A673 (cell line): ENCODE measurements at regions of chr20 and their contacts with region 1.

Region 1: GRCh38 chr20:58870239-58871014 is 17.9 kb downstream of the GNAS start:
- DNase-seq: peak; percentile 69
- H3K4me3 ChIP-seq: no peak overlapping the region
- H3K27ac ChIP-seq: no peak overlapping the region
- H3K4me1 ChIP-seq: peaks cover 4% of the 10 kb centered on the region
- H3K27me3 ChIP-seq: peaks cover 20% of the 10 kb centered on the region
- CTCF ChIP-seq: peak; percentile 83

Region 2: GRCh38 chr20:57866221-57867106 is 1004.0 kb before region 1 on chr20:
- CTCF ChIA-PET with region 1: no interaction called
- POLR2A ChIA-PET with region 1: no interaction called
- intact Hi-C with region 1: no loop called
- DNase-seq: no peak
- H3K4me3 ChIP-seq: no peak overlapping the region
- H3K27ac ChIP-seq: no peak overlapping the region
- H3K4me1 ChIP-seq: no peaks in the 10 kb centered on the region
- H3K27me3 ChIP-seq: peaks cover 43% of the 10 kb centered on the region
- CTCF ChIP-seq: no peak

Region 3: DNA sequence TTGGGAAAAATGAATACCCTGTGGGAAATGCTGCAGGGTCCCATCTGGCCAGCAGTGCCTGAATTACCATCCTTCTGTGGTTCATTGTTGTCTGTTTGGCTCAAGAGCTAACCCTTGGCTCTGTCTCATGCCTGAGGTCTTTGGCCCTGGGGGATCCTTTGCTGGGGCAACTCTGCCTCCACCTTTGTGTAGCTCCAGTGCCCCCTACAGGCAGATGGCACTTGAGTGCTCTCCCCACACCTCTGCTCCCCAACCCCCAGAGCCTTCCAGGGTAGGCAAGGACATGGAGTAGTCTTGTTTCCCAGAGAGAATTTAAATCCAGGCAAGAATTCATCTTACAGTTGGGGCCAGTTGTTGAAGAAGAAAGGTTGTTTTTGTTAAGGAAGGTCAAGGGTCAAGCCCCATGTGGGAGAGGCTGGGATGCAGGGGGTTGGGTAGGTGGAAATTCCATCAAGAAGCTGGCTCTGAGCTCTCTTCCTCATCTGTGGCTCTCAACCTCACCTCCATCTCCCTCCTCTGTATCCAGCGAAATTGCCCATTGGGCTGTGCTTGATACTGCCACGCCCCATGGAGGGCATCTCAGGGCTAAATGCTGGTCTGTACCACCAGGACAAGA is 337.4 kb after region 1 on chr20:
- CTCF ChIA-PET with region 1: interaction called, 5 read pairs
- POLR2A ChIA-PET with region 1: no interaction called
- intact Hi-C with region 1: loop called (anchors 5 kb)
- DNase-seq: peak; percentile 52
- H3K4me3 ChIP-seq: no peak overlapping the region
- H3K27ac ChIP-seq: no peak overlapping the region
- H3K4me1 ChIP-seq: no peaks in the 10 kb centered on the region
- H3K27me3 ChIP-seq: peaks cover 5% of the 10 kb centered on the region
- CTCF ChIP-seq: peak; percentile 70

Region 4: GRCh38 chr20:59222253-59223181 is 352.1 kb after region 1 on chr20:
- CTCF ChIA-PET with region 1: interaction called, 10 read pairs
- POLR2A ChIA-PET with region 1: no interaction called
- intact Hi-C with region 1: loop called (anchors 2 kb)
- DNase-seq: peak; percentile 79
- H3K4me3 ChIP-seq: peak overlapping the region; percentile 47
- H3K27ac ChIP-seq: no peak overlapping the region
- H3K4me1 ChIP-seq: peaks cover 13% of the 10 kb centered on the region
- H3K27me3 ChIP-seq: peaks cover 79% of the 10 kb centered on the region
- CTCF ChIP-seq: peak; percentile 96

Region 5: GRCh38 chr20:59403261-59403961 is 533.0 kb after region 1 on chr20:
- CTCF ChIA-PET with region 1: interaction called, 3 read pairs
- POLR2A ChIA-PET with region 1: no interaction called
- intact Hi-C with region 1: loop called (anchors 2 kb)
- DNase-seq: peak; percentile 66
- H3K4me3 ChIP-seq: peak overlapping the region; percentile 24
- H3K27ac ChIP-seq: no peak overlapping the region
- H3K4me1 ChIP-seq: peaks cover 10% of the 10 kb centered on the region
- H3K27me3 ChIP-seq: peaks cover 79% of the 10 kb centered on the region
- CTCF ChIP-seq: peak; percentile 96

Region 6: GRCh38 chr20:59455402-59456341 is 585.2 kb after region 1 on chr20:
- CTCF ChIA-PET with region 1: interaction called, 10 read pairs
- POLR2A ChIA-PET with region 1: no interaction called
- intact Hi-C with region 1: loop called (anchors 1 kb)
- DNase-seq: peak; percentile 42
- H3K4me3 ChIP-seq: no peak overlapping the region
- H3K27ac ChIP-seq: no peak overlapping the region
- H3K4me1 ChIP-seq: no peaks in the 10 kb centered on the region
- H3K27me3 ChIP-seq: peaks cover 3% of the 10 kb centered on the region
- CTCF ChIP-seq: peak; percentile 76